ENCODE measurements at regions of chr17 and their contacts with region 1.

Region 1: DNA sequence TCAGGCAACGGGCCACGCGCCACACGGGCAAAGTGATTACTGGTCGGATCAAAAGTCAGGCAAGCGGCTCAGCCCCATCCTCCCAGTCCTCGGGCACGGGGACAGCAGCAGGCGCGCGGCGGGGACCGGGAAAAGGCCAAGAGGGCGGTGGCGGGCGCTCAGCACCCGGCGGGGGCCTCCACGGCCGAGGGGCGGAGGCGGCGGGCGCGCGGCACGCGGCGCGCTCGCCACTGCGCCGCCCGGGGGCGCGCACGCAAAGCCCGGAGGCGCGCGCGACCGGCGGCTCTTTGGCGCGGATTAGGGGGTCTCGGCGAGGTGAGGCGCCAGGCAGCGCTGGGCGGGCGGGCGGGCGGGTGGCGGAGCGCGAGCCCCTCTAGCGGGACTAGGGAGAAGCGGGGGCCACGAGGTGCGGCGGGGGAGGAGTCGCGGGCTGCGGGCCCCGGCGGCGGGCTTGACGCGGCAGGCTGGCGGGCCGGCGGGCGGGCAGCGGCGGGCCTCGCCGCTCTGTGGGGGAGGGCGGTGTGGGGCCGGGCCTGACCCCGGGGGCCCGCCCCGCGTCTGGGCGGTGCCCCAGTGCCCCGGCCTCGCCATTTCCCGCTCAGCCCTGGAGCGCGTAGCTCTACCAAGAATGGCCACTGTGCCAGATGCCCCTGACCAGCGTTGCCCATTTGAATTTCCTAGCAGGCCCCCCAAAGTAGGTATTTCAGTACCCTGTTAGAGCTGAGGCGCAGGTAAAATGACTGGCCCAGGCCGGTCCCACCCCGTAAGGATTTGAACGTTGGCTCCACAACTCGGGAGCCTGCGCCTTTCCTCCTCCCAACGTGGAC is at the starts of genes ACACA and TADA2A:
- DNase-seq: peak; percentile 84 to 92
- ATAC-seq: peak; percentile 91 to 95 (median 92)
- H3K4me3 ChIP-seq: peak within 1 kb of the TSS; percentile 76
- H3K27ac ChIP-seq: peak within 1 kb of the TSS; percentile 94
- H3K4me1 ChIP-seq: peaks cover 19% of the 10 kb centered on the region
- H3K27me3 ChIP-seq: no peaks in the 10 kb centered on the region
- CTCF ChIP-seq: no peak
- total RNA-seq, gene ACACA: 21.5 to 42.6 (median 35.7) TPM
- total RNA-seq, gene TADA2A: 9.4 to 23.7 (median 17.4) TPM

Region 2: DNA sequence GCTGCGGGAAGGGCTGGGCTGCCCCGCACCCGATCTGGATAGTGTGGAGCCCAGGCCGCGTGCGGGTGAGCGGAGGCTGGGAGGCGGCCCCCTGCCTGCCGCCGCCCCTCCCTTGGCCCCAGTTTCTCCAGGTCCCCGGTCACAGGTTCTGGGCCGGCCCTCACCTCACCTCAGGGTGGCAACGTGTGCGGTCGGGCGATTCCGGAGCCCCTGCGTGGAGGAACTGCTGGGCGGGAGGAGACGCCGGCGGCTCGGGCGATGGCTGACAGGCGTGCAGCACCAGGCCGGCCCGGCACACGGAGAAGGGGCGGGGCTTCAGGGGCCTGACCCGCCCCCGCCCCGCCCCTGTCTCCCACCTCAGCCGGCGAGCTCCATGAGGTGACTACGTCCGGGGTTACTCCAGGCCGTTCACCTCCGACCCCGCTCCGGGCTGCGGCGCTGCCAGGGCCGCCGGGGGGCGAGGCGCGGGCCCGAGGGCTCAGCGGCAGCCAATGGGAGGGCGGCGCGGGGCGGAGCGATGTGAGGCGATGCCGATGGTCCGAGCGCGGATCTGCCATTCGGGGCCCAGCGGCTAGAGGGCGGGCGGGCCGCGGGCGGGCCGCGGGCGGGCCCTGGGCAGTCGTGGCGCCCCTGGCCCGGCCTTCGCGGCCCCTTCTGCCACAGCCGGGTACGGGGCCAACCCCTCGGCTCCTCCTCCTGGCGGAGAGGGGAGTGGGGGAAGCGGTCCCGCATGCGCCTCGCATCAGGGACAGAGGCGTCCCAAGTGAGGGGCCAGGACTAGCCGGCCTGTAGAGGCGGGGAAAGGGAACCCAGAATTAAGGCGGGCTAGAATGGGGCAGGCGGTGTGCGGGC is 47.8 kb before region 1 on chr17:
- intact Hi-C with region 1: loop called (anchors 5 kb)
- DNase-seq: peak; percentile 96 to 97
- ATAC-seq: peak; percentile 94 to 97 (median 96)
- H3K4me3 ChIP-seq: peak overlapping the region; percentile 86
- H3K27ac ChIP-seq: peak overlapping the region; percentile 90
- H3K4me1 ChIP-seq: peaks cover 18% of the 10 kb centered on the region
- H3K27me3 ChIP-seq: no peaks in the 10 kb centered on the region
- CTCF ChIP-seq: peak; percentile 55

Region 3: DNA sequence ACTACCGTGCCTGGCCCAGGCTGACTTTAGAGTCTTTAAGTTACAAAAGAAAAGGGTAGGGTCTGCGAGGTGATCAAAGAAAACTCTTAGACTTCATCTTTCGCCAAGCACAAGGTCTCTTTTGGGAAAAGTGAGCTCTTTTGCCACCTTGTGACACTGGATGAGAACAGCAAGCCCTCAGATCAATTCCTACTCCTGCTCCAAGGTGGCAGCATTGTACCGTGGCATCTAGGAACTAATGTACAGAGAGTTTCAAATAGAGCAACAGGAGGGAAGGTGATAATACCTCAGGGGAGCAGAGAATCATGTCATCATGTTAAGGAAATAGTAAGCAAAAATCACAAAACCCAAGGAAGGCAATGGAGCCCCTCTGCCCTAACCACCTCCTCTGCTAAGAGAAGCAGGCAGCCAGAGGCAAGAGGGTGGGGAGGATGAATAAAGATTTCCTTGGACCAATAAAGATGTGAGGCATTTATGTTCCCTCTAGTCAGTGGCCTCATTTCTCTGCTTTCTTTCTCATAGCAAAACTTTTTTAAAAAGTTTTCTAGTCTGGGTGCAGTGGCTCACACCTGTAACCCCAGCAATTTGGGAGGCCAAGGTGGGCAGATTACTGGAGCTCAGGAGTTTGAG is 33.2 kb before region 1 on chr17:
- intact Hi-C with region 1: loop called in 1 of 2 experiments (anchors 5 kb)
- DNase-seq: no peak
- ATAC-seq: peak; percentile 94 to 98 (median 96)
- H3K4me3 ChIP-seq: no peak overlapping the region
- H3K27ac ChIP-seq: no peak overlapping the region
- H3K4me1 ChIP-seq: no peaks in the 10 kb centered on the region
- H3K27me3 ChIP-seq: no peaks in the 10 kb centered on the region
- CTCF ChIP-seq: peak; percentile 93

Region 4: GRCh38 chr17:37489197-37490001 is 82.6 kb after region 1 on chr17 and contains the start of gene DUSP14:
- intact Hi-C with region 1: loop called in 1 of 2 experiments (anchors 5 kb)
- DNase-seq: peak; percentile 87 to 91
- ATAC-seq: peak; percentile 85 to 86 (median 85)
- H3K4me3 ChIP-seq: peak within 1 kb of the TSS; percentile 95
- H3K27ac ChIP-seq: peak within 1 kb of the TSS; percentile 97
- H3K4me1 ChIP-seq: peaks cover 31% of the 10 kb centered on the region
- H3K27me3 ChIP-seq: no peaks in the 10 kb centered on the region
- CTCF ChIP-seq: no peak
- total RNA-seq, gene DUSP14: 9.3 to 21.5 (median 14.0) TPM